Heart right ventricle (tissue), 16 donors: ENCODE measurements at regions of chr11 and their contacts with region 1.

Region 1: DNA sequence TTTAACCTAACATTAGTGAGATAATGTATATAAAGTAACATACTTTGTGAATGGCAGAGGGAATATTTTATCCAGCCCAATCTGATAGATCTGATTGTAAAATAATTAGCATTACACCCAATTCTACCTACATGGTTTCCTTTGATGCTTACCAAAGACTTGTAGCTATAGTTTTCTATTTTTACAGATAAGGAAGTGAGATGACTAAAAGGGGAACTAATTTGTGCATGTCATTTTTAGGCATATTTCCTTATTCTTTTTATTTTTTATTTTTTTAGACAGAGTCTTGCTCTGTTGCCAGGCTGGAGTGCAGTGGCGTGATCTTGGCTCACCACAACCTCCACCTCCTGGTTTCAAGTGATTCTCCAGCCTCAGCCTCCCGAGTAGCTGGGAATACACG is 793.7 kb upstream of the LRRC4C start:
- DNase-seq: no peak
- ATAC-seq: no peak
- H3K4me3 ChIP-seq: no peak overlapping the region
- H3K27ac ChIP-seq: no peak overlapping the region
- H3K4me1 ChIP-seq: no peaks in the 10 kb centered on the region
- H3K27me3 ChIP-seq: no peaks in the 10 kb centered on the region
- CTCF ChIP-seq: no peak

Region 2: DNA sequence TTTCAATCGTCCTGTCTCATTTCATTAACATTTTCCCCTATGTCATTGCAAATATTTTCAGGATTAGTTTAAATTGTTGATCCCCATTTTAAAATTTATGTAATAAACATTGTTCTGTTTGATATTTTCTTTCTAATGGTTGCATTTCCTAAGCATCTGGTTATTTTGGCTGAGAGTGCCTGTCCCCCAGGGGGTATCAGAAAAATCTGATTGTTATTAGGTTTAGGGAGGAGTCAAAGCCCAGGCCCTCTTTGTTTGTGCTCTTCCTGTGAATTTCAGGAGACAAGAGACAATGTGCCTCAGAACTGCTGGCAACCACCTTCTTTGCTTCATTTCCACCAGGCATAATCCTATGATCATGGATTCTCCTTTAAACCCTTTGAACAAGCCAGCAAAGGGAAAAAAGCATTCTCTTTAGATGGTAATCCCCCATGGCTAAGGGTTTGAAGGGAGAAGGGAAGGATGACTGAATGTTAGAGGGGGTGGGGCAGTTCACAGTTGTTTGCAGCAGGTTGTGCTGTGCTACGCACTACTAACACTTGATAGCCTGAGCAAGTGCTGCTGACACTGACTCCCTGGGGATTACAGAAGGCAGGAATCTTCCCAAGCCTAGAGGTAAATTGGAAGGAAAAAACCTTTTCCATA is 331.3 kb before region 1 on chr11:
- intact Hi-C with region 1: no loop called
- DNase-seq: no peak
- ATAC-seq: no peak
- H3K4me3 ChIP-seq: no peak overlapping the region
- H3K27ac ChIP-seq: no peak overlapping the region
- H3K4me1 ChIP-seq: no peaks in the 10 kb centered on the region
- H3K27me3 ChIP-seq: no peaks in the 10 kb centered on the region
- CTCF ChIP-seq: no peak

Region 3: GRCh38 chr11:42225664-42226063 is 27.5 kb before region 1 on chr11:
- intact Hi-C with region 1: no loop called
- DNase-seq: no peak
- ATAC-seq: no peak
- H3K4me3 ChIP-seq: no peak overlapping the region
- H3K27ac ChIP-seq: no peak overlapping the region
- H3K4me1 ChIP-seq: no peaks in the 10 kb centered on the region
- H3K27me3 ChIP-seq: no peaks in the 10 kb centered on the region
- CTCF ChIP-seq: no peak

Region 4: GRCh38 chr11:42311514-42311913 is 58.4 kb after region 1 on chr11:
- intact Hi-C with region 1: loop called in 1 of 10 experiments (anchors 10 kb)
- DNase-seq: no peak
- ATAC-seq: peak in 1 of 8 donors; percentile 39
- H3K4me3 ChIP-seq: no peak overlapping the region
- H3K27ac ChIP-seq: no peak overlapping the region
- H3K4me1 ChIP-seq: no peaks in the 10 kb centered on the region
- H3K27me3 ChIP-seq: no peaks in the 10 kb centered on the region
- CTCF ChIP-seq: no peak